ENCODE measurements at regions of chr1 and their contacts with region 1.

Region 1: GRCh38 chr1:184386312-184387068 is at the start of gene C1orf21:
- DNase-seq: peak in 8 of 9 donors; percentile 11 to 87 (median 37)
- ATAC-seq: peak; percentile 86
- H3K4me3 ChIP-seq: peak within 1 kb of the TSS; percentile 56
- H3K4me3 Mint-ChIP-seq: peak within 1 kb of the TSS; percentile 67 to 90 (median 82)
- H3K27ac ChIP-seq: no peak within 1 kb of the TSS
- H3K27ac Mint-ChIP-seq: peak within 1 kb of the TSS in 2 of 9 donors; percentile 41 to 59
- H3K4me1 ChIP-seq: no peaks in the 10 kb centered on the region
- H3K4me1 Mint-ChIP-seq: peaks cover 8 to 27% (median 22%) of the 10 kb centered on the region in 7 donors
- H3K27me3 ChIP-seq: peaks cover 0 to 3% of the 10 kb centered on the region in 2 donors
- H3K27me3 Mint-ChIP-seq: peaks cover 51 to 85% (median 54%) of the 10 kb centered on the region in 5 donors
- total RNA-seq, gene C1orf21: 0.46 to 8.5 (median 1.7) TPM

Region 2: GRCh38 chr1:184352776-184353175 is 33.7 kb before region 1 on chr1:
- CTCF ChIA-PET with region 1: no interaction called
- POLR2A ChIA-PET with region 1: no interaction called
- intact Hi-C with region 1: no loop called
- DNase-seq: no peak
- ATAC-seq: no peak
- H3K4me3 ChIP-seq: no peak overlapping the region
- H3K4me3 Mint-ChIP-seq: no peak overlapping the region
- H3K27ac ChIP-seq: no peak overlapping the region
- H3K27ac Mint-ChIP-seq: no peak overlapping the region
- H3K4me1 ChIP-seq: no peaks in the 10 kb centered on the region
- H3K4me1 Mint-ChIP-seq: no peaks in the 10 kb centered on the region
- H3K27me3 ChIP-seq: no peaks in the 10 kb centered on the region
- H3K27me3 Mint-ChIP-seq: peaks cover 13 to 26% (median 20%) of the 10 kb centered on the region in 5 donors

Region 3: DNA sequence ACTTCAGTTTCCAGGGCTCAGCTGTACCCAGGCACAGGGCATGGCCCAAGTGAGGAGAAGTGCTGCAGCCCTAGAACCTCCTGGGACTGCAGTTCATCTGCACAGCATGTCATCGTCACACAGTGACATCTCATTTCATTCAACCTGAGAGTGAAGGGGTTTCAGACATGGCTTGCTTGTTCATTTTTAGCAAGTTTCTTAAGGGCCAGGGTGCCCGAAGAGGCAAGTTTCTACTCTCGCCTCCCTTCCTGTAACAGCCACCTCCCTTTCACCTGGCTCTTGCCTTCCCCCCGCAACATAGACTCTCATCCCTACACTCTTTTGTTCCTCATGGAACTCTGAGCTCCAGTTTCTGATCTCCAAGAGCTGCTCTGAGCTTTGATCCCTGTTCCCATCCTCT is 108.4 kb after region 1 on chr1:
- CTCF ChIA-PET with region 1: no interaction called
- POLR2A ChIA-PET with region 1: no interaction called
- intact Hi-C with region 1: loop called in 1 of 2 experiments (anchors 5 kb)
- DNase-seq: no peak
- ATAC-seq: no peak
- H3K4me3 ChIP-seq: no peak overlapping the region
- H3K4me3 Mint-ChIP-seq: no peak overlapping the region
- H3K27ac ChIP-seq: no peak overlapping the region
- H3K27ac Mint-ChIP-seq: no peak overlapping the region
- H3K4me1 ChIP-seq: peaks cover 0 to 5% of the 10 kb centered on the region in 2 donors
- H3K4me1 Mint-ChIP-seq: peaks cover 0 to 20% (median 6%) of the 10 kb centered on the region in 7 donors
- H3K27me3 ChIP-seq: no peaks in the 10 kb centered on the region
- H3K27me3 Mint-ChIP-seq: no peaks in the 10 kb centered on the region

Region 4: GRCh38 chr1:184545595-184545994 is 159.1 kb after region 1 on chr1:
- CTCF ChIA-PET with region 1: no interaction called
- POLR2A ChIA-PET with region 1: no interaction called
- intact Hi-C with region 1: no loop called
- DNase-seq: no peak
- ATAC-seq: no peak
- H3K4me3 ChIP-seq: no peak overlapping the region
- H3K4me3 Mint-ChIP-seq: no peak overlapping the region
- H3K27ac ChIP-seq: no peak overlapping the region
- H3K27ac Mint-ChIP-seq: no peak overlapping the region
- H3K4me1 ChIP-seq: no peaks in the 10 kb centered on the region
- H3K4me1 Mint-ChIP-seq: no peaks in the 10 kb centered on the region
- H3K27me3 ChIP-seq: no peaks in the 10 kb centered on the region
- H3K27me3 Mint-ChIP-seq: peaks cover 0 to 19% (median 3%) of the 10 kb centered on the region in 5 donors